ENCODE measurements at regions of chr4 and their contacts with region 1.

Region 1: GRCh38 chr4:2241410-2242353 is at the starts of genes HAUS3 and POLN:
- DNase-seq: peak; percentile 97 to 99
- H3K4me3 ChIP-seq: peak within 1 kb of the TSS; percentile 76 to 94
- H3K27ac ChIP-seq: peak within 1 kb of the TSS; percentile 71 to 82
- H3K4me1 ChIP-seq: peaks cover 0 to 85% (median 35%) of the 10 kb centered on the region in 4 donors
- H3K27me3 ChIP-seq: no peaks in the 10 kb centered on the region
- CTCF ChIP-seq: no peak

Region 2: DNA sequence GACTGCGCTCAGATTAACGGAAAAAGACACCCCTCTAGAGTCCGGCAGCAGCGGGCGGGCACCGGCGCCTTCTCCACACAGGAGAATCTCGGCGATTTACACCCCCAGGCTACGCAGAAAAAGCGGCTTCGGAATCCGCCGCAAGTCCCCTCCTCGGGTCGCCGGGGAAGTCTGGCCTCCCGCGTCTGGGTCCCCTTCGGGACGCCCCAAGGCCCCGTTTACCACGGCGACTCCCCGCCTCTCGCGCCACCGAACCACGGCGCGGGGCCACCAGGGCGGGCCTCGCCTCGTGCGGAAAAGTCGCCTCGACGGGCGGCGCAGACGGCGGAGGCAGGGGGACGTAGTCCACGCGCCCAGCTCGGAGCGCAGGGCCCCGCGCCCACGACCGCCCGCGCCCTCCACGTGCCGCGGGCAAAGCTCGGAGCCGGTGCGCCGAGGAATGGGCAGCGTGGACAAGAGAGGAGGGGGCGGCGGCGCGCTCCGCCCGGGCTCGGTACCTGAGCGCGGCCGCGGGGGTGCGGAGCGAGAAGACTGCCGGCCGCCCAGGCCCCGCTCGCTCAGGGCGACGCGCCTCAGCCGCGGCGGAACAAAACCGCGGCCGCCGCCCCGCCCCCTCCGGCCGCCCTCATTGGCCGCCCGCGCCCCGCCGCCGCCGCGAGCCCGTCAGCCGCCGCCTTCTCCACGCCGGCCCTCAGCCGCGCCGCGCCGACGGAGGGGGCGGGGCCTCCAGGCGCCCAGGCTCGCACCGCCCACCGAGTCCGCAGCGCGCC is 557.8 kb before region 1 on chr4 and contains the start of gene FAM53A:
- intact Hi-C with region 1: loop called (anchors 5 kb)
- DNase-seq: peak; percentile 84 to 94
- H3K4me3 ChIP-seq: peak within 1 kb of the TSS; percentile 77 to 95
- H3K27ac ChIP-seq: peak within 1 kb of the TSS; percentile 84 to 86
- H3K4me1 ChIP-seq: peaks cover 0 to 16% (median 3%) of the 10 kb centered on the region in 4 donors
- H3K27me3 ChIP-seq: no peaks in the 10 kb centered on the region
- CTCF ChIP-seq: peak in 1 of 2 experiments; percentile 13

Region 3: GRCh38 chr4:2194496-2194895 is 47.2 kb before region 1 on chr4:
- intact Hi-C with region 1: no loop called
- DNase-seq: no peak
- H3K4me3 ChIP-seq: no peak overlapping the region
- H3K27ac ChIP-seq: no peak overlapping the region
- H3K4me1 ChIP-seq: no peaks in the 10 kb centered on the region
- H3K27me3 ChIP-seq: no peaks in the 10 kb centered on the region
- CTCF ChIP-seq: no peak

Region 4: GRCh38 chr4:2418650-2419571 is 177.2 kb after region 1 on chr4 and contains the start of gene CFAP99:
- intact Hi-C with region 1: loop called (anchors 5 kb)
- DNase-seq: peak; percentile 96 to 97
- H3K4me3 ChIP-seq: peak within 1 kb of the TSS; percentile 56 to 67
- H3K27ac ChIP-seq: peak within 1 kb of the TSS in 1 of 2 donors; percentile 34
- H3K4me1 ChIP-seq: peaks cover 0 to 34% (median 30%) of the 10 kb centered on the region in 4 donors
- H3K27me3 ChIP-seq: peaks cover 0 to 43% of the 10 kb centered on the region in 2 donors
- CTCF ChIP-seq: no peak

Region 5: GRCh38 chr4:2637956-2638552 is 396.4 kb after region 1 on chr4:
- intact Hi-C with region 1: no loop called
- DNase-seq: peak in 1 of 2 donors; percentile 57
- H3K4me3 ChIP-seq: no peak overlapping the region
- H3K27ac ChIP-seq: no peak overlapping the region
- H3K4me1 ChIP-seq: no peaks in the 10 kb centered on the region
- H3K27me3 ChIP-seq: no peaks in the 10 kb centered on the region
- CTCF ChIP-seq: no peak

Measured in tibial artery (tissue), 4 donors.